Activated CD8-positive, alpha-beta T cell treated with anti-CD3 and anti-CD28 coated beads, Interleukin-2, amount 10 ng/mL, durations not matched to agents 7 days and 5 days (primary cell): ENCODE measurements at regions of chr14 and their contacts with region 1.

Region 1: DNA sequence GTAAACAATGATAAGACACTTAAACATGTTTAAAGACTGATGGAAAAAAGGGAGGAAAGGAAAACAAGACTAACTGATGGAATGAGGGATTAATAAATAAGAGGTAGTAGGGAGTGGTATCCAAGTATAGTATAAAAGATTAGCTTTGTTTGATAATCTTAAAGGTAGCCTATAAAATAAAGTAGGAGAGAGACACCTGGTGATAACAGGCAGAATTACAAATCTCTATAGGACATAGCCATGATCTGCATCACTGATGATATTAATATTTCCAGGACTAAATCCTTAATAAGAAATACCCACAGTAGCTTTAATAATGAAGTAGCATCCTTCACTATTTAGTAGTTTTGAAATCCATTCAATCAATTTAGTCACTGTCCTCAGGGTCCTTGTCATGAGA is 30.4 kb downstream of the DLGAP5 start:
- DNase-seq: no peak
- ATAC-seq: no peak
- H3K4me3 Mint-ChIP-seq: no peak overlapping the region
- H3K27ac Mint-ChIP-seq: no peak overlapping the region
- H3K4me1 Mint-ChIP-seq: peaks cover 12% of the 10 kb centered on the region
- H3K27me3 Mint-ChIP-seq: no peaks in the 10 kb centered on the region

Region 2: DNA sequence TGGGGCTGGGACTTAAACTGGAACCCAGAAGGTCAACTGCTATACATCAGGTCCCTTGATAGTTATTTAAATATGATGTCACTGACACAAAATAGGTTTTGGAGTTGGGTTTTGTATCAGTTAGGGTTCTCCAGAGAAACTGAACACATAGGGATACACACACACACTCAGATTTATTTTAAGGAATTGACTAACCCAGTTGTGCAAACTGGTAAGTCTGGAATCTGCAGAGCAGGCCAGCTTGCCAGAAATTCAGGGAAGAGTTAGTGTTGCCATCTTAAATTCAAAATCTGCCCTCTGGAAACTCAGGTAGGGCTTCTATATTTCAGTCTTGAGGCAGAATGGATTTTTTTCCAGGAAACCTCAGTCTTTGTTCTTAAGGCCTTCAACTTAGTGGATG is 72.6 kb before region 1 on chr14:
- CTCF ChIA-PET with region 1: interaction called, 62 read pairs
- POLR2A ChIA-PET with region 1: interaction called, 3 read pairs
- DNase-seq: no peak
- ATAC-seq: no peak
- H3K4me3 Mint-ChIP-seq: no peak overlapping the region
- H3K27ac Mint-ChIP-seq: no peak overlapping the region
- H3K4me1 Mint-ChIP-seq: peaks cover 27% of the 10 kb centered on the region
- H3K27me3 Mint-ChIP-seq: peaks cover 4% of the 10 kb centered on the region

Region 3: GRCh38 chr14:55094321-55095157 is 66.5 kb before region 1 on chr14:
- CTCF ChIA-PET with region 1: interaction called, 62 read pairs
- POLR2A ChIA-PET with region 1: interaction called, 3 read pairs
- DNase-seq: no peak
- ATAC-seq: no peak
- H3K4me3 Mint-ChIP-seq: no peak overlapping the region
- H3K27ac Mint-ChIP-seq: no peak overlapping the region
- H3K4me1 Mint-ChIP-seq: peaks cover 47% of the 10 kb centered on the region
- H3K27me3 Mint-ChIP-seq: no peaks in the 10 kb centered on the region

Region 4: GRCh38 chr14:55297611-55298441 is 136.8 kb after region 1 on chr14:
- CTCF ChIA-PET with region 1: no interaction called
- POLR2A ChIA-PET with region 1: no interaction called
- DNase-seq: no peak
- ATAC-seq: no peak
- H3K4me3 Mint-ChIP-seq: no peak overlapping the region
- H3K27ac Mint-ChIP-seq: no peak overlapping the region
- H3K4me1 Mint-ChIP-seq: peaks cover 53% of the 10 kb centered on the region
- H3K27me3 Mint-ChIP-seq: no peaks in the 10 kb centered on the region